H1 (cell line): ENCODE measurements at regions of chrX and their contacts with region 1.

Region 1: DNA sequence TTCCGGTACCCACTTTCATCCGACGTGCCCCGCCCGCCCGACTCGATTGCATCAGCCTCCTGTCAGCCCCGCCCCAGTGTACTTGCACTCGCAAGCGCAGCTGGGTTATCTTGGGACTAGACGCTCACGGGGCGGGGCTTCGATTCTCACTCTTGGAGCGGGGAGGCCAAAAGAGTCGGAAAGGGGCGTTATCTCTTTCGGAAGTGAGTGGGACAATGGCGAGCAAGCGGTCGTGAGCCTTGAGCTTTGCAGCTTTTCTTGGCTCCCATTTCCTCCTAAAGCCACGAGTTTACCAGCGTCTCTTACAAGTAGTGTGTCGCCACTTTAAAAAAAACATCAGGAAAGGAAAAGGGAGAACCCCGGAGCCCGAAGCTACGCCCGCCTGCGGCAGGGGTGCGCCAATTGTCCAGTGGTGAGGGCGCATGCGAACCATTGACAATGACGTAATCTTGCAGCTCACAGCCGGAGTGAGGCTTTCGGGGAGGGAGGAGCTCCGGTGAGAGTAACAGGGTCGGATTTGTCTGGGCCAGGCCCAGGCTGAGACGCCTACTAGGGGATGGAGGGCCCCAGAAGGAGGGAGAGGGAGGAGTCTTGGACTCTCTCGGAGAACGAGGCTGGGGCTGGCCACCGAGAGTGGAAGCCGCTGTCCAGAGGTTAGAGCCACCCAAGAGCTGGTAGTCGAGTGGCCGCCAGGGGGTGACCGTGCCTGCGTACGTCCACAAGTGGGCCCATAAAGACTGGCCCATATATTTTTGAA is 109.5 kb downstream of the GNL3L start:
- DNase-seq: peak; percentile 82 to 85
- H3K4me3 ChIP-seq: peak overlapping the region; percentile 65 to 84 (median 71)
- H3K27ac ChIP-seq: peak overlapping the region; percentile 97
- H3K4me1 ChIP-seq: peaks cover 0 to 7% (median 3%) of the 10 kb centered on the region in 4 experiments; a peak in 3 of 7 replicates
- H3K27me3 ChIP-seq: no peaks in the 10 kb centered on the region
- CTCF ChIP-seq: peak; percentile 48 to 61 (median 60)
- EP300 ChIP-seq: no peak
- POLR2A ChIP-seq: peak; percentile 59 to 90
- RAD21 ChIP-seq: peak; percentile 63 to 68

Region 2: DNA sequence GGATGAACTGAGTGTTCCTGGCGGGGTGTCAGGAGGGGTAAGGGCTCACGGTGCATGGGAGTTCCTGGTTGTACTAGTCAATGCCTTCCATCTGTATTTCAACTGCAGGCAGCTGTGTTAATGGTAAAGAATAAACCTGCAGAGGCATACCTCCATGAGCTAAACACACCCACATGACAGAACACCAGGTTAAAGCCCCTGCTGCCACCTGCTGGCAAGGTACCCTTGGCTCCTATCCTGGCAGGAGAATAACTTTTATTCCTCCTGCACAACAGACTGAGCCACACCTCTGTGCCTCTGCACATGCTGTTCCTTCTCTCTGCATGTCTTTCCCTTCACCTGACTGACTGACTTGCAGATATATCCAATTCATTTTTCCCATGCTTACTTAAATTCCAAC is 147.4 kb after region 1 on chrX:
- CTCF ChIA-PET with region 1: interaction called, 14 read pairs
- POLR2A ChIA-PET with region 1: interaction called, 12 read pairs
- DNase-seq: no peak
- H3K4me3 ChIP-seq: no peak overlapping the region
- H3K27ac ChIP-seq: no peak overlapping the region
- H3K4me1 ChIP-seq: no peaks in the 10 kb centered on the region
- H3K27me3 ChIP-seq: no peaks in the 10 kb centered on the region
- CTCF ChIP-seq: peak; percentile 37 to 65 (median 47)
- EP300 ChIP-seq: no peak
- POLR2A ChIP-seq: no peak
- RAD21 ChIP-seq: peak; percentile 62 to 71

Region 3: GRCh38 chrX:54808605-54809483 is 169.3 kb after region 1 on chrX:
- CTCF ChIA-PET with region 1: no interaction called
- POLR2A ChIA-PET with region 1: interaction called, 11 read pairs
- DNase-seq: peak; percentile 90 to 91
- H3K4me3 ChIP-seq: peak overlapping the region; percentile 53 to 95 (median 75)
- H3K27ac ChIP-seq: peak overlapping the region; percentile 81
- H3K4me1 ChIP-seq: peaks cover 0 to 9% (median 1%) of the 10 kb centered on the region in 4 experiments; a peak in 5 of 7 replicates
- H3K27me3 ChIP-seq: no peaks in the 10 kb centered on the region
- CTCF ChIP-seq: no peak
- EP300 ChIP-seq: no peak
- POLR2A ChIP-seq: peak in 1 of 2 experiments; percentile 58; a peak in 1 of 3 replicates
- RAD21 ChIP-seq: no peak